ENCODE measurements at regions of chr16 and their contacts with region 1.

Region 1: DNA sequence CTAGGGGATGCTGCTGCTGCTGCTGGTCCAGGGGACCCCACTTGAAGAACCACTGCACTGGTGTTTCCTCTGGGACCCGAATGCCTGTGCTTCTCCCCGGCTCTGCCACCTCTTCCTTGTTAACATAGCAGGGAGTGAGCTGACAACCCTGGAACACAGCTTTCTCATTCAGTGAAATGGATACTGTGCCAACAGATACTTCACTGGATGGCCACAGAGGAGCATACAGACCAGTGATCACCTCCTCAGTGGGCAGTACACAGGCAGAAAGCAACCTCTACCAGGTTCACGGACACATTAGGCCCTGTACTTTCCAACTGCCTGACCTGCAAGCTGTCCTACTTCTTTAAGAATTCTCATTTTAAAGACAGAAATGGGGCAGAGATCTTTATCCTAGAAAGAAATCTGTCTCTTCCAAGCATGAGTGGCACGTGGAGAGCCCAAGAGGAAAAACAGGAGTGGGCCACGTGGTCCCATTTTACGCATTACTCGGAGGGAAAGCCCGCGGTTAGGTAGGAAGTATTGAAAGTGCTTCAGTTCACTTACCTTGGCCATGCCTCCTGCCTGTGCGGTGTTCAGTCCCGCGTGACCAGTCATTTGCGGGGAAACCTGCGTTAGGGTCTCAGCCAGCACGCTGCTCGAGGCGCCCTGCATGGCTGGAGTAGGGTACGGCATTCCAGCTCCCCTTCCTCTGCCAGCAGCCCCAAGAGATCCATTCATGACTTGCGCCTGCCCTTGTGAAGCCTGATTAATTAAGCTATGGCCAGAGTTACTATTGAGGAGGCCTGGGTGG is 30.6 kb downstream of the CREBBP start:
- DNase-seq: no peak
- H3K4me3 ChIP-seq: no peak overlapping the region
- H3K27me3 ChIP-seq: no peaks in the 10 kb centered on the region
- CTCF ChIP-seq: no peak

Region 2: GRCh38 chr16:3838600-3839401 is 11.1 kb before region 1 on chr16:
- CTCF ChIA-PET with region 1: no interaction called
- POLR2A ChIA-PET with region 1: interaction called, 23 read pairs
- DNase-seq: no peak
- H3K4me3 ChIP-seq: no peak overlapping the region
- H3K27me3 ChIP-seq: no peaks in the 10 kb centered on the region
- CTCF ChIP-seq: no peak

Region 3: GRCh38 chr16:3865241-3865640 is 15.3 kb after region 1 on chr16:
- CTCF ChIA-PET with region 1: interaction called, 3 read pairs
- POLR2A ChIA-PET with region 1: interaction called, 26 read pairs
- DNase-seq: no peak
- H3K4me3 ChIP-seq: no peak overlapping the region
- H3K27me3 ChIP-seq: no peaks in the 10 kb centered on the region
- CTCF ChIP-seq: no peak

Region 4: GRCh38 chr16:4064950-4065352 is 215.0 kb after region 1 on chr16:
- CTCF ChIA-PET with region 1: no interaction called
- POLR2A ChIA-PET with region 1: no interaction called
- DNase-seq: no peak
- H3K4me3 ChIP-seq: no peak overlapping the region
- H3K27me3 ChIP-seq: no peaks in the 10 kb centered on the region
- CTCF ChIP-seq: no peak

Region 5: GRCh38 chr16:4402439-4403132 is 552.6 kb after region 1 on chr16:
- CTCF ChIA-PET with region 1: no interaction called
- POLR2A ChIA-PET with region 1: no interaction called
- DNase-seq: no peak
- H3K4me3 ChIP-seq: no peak overlapping the region
- H3K27me3 ChIP-seq: no peaks in the 10 kb centered on the region
- CTCF ChIP-seq: peak; percentile 88

Measured in BJ (cell line).